ENCODE measurements at regions of chr12 and their contacts with region 1.

Region 1: DNA sequence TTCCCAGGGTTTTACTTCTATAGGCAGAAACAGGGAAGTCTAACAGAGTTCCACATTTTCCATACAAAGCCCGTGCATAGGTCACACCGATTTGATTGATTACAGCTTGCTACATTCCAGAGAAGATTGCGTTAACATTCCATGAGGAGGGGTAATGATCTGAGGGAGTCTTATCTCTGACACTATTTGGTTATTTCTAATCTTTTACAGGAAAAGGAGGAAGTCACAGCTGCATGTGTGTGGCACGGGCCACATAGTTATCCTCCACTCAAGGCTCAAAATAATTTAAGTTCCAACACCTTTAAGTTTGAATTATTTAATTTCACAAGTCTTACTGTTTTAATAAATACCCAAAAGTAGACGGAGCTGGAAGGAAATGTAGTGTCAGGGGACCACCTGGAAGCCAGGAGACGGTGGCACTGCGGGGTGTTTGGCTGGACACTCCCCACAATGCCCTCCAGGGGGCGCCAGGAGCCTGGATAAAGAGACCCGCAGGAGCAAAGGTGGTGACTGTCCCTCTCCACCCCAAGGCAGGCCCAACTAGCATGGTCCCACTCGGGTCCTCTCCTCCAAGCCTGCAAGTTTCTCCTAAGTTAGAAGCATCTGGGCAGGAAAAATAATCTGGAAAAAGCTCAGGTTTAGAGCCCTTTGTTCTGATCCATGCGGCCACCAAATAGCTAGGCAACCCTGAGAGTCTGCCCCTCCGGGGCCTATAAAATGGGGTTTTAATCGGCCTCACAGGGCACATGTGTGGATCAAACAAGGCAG is 20.2 kb downstream of the KRT8 start:
- DNase-seq: peak; percentile 90
- ATAC-seq: peak; percentile 93
- H3K4me3 Mint-ChIP-seq: no peak overlapping the region
- H3K27ac Mint-ChIP-seq: no peak overlapping the region
- H3K4me1 Mint-ChIP-seq: peaks cover 3% of the 10 kb centered on the region
- H3K27me3 Mint-ChIP-seq: peaks cover 6% of the 10 kb centered on the region
- CTCF ChIP-seq: peak; percentile 94

Region 2: DNA sequence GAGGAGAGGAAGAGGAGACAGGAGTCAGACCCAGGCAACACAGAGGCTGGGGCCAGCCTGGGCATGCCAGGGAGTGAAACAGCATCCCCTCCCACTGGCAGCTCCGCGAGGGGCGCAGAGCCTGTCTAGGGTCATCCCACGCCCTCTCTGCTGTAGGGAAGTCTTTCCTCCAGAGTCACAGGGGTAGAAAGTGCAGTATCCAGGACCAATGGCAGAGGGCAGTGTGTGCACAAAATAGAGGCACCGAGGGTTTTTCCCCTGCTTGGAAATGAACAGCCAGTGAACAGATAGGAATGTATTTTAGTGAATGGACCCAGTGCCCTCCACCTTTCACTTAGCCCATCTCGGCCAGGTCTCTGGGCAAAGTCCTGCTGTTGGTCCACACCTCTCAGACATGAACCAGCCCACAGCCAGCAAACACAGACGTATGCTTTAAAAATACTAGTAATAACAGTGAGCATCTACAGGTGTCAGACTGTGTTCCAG is 301.7 kb before region 1 on chr12:
- CTCF ChIA-PET with region 1: interaction called, 325 read pairs
- POLR2A ChIA-PET with region 1: no interaction called
- intact Hi-C with region 1: no loop called
- DNase-seq: peak; percentile 82
- ATAC-seq: peak; percentile 83
- H3K4me3 Mint-ChIP-seq: no peak overlapping the region
- H3K27ac Mint-ChIP-seq: no peak overlapping the region
- H3K4me1 Mint-ChIP-seq: peaks cover 34% of the 10 kb centered on the region
- H3K27me3 Mint-ChIP-seq: no peaks in the 10 kb centered on the region
- CTCF ChIP-seq: peak; percentile 77

Region 3: DNA sequence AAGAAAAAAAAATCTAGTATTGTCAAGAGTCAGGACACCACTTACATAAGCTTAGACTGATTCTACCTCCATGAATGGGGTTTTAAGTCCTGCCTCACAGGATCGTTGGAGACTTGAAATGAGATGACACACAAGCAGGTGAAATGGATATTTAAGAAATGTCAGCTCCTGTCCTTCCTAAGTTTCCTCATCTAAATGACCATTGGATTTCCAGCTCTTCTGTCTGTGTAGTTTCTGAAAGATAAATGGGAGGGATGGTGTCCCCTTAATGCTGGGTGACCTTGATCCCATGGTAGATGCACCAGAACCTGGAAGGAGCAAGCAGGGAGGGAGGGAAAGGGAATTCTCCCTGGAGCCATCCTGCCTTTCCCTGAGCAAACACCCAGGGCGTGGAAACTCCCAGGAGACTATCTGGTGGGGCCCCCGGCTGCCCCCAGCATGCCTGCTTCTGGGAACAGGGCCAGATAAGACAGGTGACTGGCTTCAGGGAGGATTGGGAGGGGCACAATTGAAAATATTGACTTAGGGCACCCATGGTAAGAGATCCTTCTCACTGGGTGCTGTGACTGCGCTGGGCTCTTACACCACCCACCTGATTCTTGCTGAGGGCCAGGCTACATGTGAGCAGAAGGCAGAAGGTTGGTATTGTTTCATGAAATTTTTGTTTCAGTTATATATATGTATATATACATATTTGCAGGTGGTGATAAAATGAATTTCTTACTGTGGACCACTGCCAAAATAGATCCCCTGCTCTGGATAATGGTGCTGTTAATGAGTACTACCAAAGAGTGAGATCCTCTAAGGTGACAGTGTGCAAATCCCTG is 10.6 kb after region 1 on chr12:
- CTCF ChIA-PET with region 1: interaction called, 50 read pairs
- POLR2A ChIA-PET with region 1: interaction called, 3 read pairs
- intact Hi-C with region 1: no loop called
- DNase-seq: no peak
- ATAC-seq: no peak
- H3K4me3 Mint-ChIP-seq: no peak overlapping the region
- H3K27ac Mint-ChIP-seq: no peak overlapping the region
- H3K4me1 Mint-ChIP-seq: no peaks in the 10 kb centered on the region
- H3K27me3 Mint-ChIP-seq: peaks cover 4% of the 10 kb centered on the region
- CTCF ChIP-seq: no peak

Region 4: DNA sequence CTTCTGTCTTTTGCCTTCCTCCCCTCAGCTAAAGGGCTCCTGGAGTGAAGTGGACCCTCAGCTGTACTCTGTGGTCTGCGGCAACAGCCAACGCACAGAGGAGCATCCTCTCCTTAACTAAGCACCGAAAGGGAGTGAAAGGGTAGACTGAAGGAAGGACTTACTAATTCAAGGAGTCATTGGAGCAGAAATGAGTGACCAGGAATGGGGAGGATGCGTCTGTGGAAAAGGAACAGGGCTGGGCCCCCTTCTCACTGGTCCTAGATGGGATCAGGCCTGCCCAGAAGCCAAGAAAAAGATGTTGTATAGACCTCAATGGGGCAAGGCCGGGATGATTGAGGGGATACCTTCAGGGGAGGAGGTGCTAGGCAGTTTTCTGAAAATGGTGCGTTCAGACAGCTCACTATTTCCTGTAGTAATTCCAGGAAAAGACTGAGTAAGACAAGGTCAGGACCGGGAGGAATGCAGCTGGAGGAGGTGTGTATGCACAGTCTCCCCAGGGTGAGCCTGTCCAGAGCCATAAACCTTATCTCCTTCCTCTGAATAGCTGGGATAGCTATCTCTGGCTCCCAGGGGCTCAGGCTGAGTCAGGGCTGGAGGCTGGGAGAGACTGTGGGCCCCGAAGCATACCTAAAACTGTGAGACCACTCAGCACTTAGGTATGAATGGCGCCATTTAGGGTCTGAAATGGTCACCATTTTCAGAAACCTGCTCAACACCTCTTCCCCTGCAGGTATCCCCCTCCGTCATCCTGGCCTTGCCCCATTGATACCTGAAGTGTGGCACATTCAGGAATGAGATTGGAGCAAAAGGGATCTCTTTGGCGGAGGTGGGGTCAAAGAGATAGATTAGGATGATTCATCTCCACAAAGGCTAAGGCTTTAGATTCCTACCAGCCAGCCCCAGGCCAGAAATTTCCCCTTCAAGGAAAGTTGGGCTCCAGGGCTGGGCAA is 40.3 kb after region 1 on chr12:
- CTCF ChIA-PET with region 1: interaction called, 52 read pairs
- POLR2A ChIA-PET with region 1: no interaction called
- intact Hi-C with region 1: no loop called
- DNase-seq: no peak
- ATAC-seq: no peak
- H3K4me3 Mint-ChIP-seq: no peak overlapping the region
- H3K27ac Mint-ChIP-seq: no peak overlapping the region
- H3K4me1 Mint-ChIP-seq: peaks cover 6% of the 10 kb centered on the region
- H3K27me3 Mint-ChIP-seq: peaks cover 2% of the 10 kb centered on the region
- CTCF ChIP-seq: no peak

Region 5: GRCh38 chr12:52956987-52957386 is 72.3 kb after region 1 on chr12:
- CTCF ChIA-PET with region 1: interaction called, 67 read pairs
- POLR2A ChIA-PET with region 1: no interaction called
- intact Hi-C with region 1: no loop called
- DNase-seq: no peak
- ATAC-seq: no peak
- H3K4me3 Mint-ChIP-seq: no peak overlapping the region
- H3K27ac Mint-ChIP-seq: no peak overlapping the region
- H3K4me1 Mint-ChIP-seq: no peaks in the 10 kb centered on the region
- H3K27me3 Mint-ChIP-seq: no peaks in the 10 kb centered on the region
- CTCF ChIP-seq: no peak

Region 6: GRCh38 chr12:52992699-52993557 is 108.2 kb after region 1 on chr12:
- CTCF ChIA-PET with region 1: interaction called, 552 read pairs
- POLR2A ChIA-PET with region 1: no interaction called
- intact Hi-C with region 1: no loop called
- DNase-seq: no peak
- ATAC-seq: no peak
- H3K4me3 Mint-ChIP-seq: no peak overlapping the region
- H3K27ac Mint-ChIP-seq: no peak overlapping the region
- H3K4me1 Mint-ChIP-seq: no peaks in the 10 kb centered on the region
- H3K27me3 Mint-ChIP-seq: no peaks in the 10 kb centered on the region
- CTCF ChIP-seq: no peak